GM13976 (cell line): ENCODE measurements at regions of chr7 and their contacts with region 1.

Region 1: DNA sequence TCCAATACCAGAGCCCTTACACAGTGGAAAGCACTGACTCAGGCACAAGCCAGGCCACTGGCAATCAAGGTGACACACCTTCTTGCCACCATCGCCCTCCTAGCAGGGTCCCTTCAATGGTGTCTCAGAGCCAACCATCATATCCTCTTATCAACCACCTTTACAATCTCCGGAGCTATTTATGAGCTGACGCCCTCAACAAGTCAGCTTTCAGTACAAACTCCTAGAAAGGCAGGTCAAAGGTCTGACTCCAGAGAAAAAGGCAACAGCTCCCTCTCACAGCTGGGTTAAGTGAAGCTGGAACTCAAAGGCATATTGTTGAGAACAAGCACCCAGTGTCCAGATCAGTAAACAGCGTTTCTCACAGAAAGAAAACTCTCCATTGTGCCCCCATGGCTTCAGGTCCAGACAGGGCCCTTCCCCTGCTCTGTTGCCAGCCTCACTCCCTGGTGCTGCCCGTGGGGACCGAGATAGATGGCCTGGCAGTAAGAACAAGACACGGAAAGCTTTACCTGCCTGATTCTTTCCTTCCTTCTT is 2.4 kb downstream of the ZNF3 start:
- DNase-seq: no peak
- CTCF ChIP-seq: no peak

Region 2: GRCh38 chr7:99997545-99998137 is 81.5 kb before region 1 on chr7:
- in situ Hi-C with region 1: loop called (anchors 10 kb)
- DNase-seq: peak; percentile 77
- CTCF ChIP-seq: peak; percentile 1

Region 3: GRCh38 chr7:100221767-100222444 is 142.8 kb after region 1 on chr7:
- in situ Hi-C with region 1: no loop called
- DNase-seq: peak; percentile 51
- CTCF ChIP-seq: no peak